CD4-positive, alpha-beta memory T cell (primary cell): ENCODE measurements at regions of chr22 and their contacts with region 1.

Region 1: DNA sequence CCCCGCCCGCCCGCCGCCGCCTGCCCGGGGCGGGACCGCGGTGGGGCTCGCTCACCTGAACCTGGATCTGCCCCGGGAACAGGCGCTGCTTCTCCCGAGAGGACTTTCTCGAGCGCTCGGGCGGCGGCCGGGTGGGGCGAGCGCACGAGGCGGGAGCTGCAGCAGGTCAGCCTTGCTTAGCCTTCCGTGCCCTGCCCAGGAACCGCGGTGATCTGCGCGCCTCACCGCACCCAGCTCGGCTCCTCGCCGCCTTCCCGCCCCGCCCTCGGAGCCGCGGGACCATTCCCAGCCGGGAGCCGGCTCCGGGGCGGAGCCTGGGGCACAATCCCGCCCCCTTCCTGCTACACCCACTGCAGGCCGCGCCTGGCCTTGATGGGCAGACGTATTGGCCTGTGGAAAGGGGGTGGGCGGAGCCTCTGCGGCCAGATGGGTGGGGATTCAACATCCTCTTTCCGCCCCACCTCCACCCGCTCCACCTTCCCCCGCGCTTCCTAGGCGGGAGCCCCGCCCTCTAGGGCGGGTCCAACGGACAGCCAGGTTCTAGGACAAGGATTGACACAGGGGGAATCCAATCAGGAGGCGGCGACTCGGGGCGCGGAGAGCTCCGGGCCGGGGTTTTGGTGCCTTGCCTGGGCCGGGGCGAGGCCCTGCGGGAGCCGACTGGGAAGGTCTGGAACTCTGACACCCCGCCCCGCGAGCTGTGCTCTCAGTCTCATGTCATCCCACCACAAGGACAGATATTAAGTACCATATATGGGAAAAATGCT is at the start of gene MYH9:
- DNase-seq: peak; percentile 99
- H3K4me3 ChIP-seq: peak within 1 kb of the TSS; percentile 88 to 92
- H3K4me3 Mint-ChIP-seq: peak within 1 kb of the TSS; percentile 88 to 98 (median 94)
- H3K27ac ChIP-seq: peak within 1 kb of the TSS; percentile 80
- H3K27ac Mint-ChIP-seq: peak within 1 kb of the TSS; percentile 84 to 99 (median 97)
- H3K4me1 ChIP-seq: peaks cover 28% of the 10 kb centered on the region
- H3K4me1 Mint-ChIP-seq: peaks cover 12 to 45% (median 26%) of the 10 kb centered on the region in 4 donors
- H3K27me3 ChIP-seq: no peaks in the 10 kb centered on the region
- H3K27me3 Mint-ChIP-seq: no peaks in the 10 kb centered on the region
- total RNA-seq, gene MYH9: 717 to 734 TPM

Region 2: DNA sequence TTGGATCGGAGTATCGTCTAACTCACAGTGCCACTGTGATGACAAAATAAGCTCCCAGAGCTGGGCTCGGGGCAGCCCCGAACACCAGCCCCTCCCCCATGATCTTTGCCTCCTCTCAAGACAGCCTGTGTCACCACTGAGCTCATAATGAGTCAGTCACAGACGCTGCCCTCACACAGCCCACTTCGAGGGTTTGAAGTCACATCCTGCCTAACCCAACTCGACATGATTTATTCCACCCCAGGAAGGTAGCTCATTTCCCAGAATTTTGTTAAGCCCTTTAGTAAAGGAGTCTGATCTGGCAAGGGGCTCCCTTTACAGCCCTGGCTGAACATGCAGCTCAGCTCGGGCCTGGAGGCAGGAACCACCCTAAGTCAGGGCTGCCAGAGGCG is 22.9 kb before region 1 on chr22:
- CTCF ChIA-PET with region 1: interaction called, 12 read pairs
- POLR2A ChIA-PET with region 1: interaction called, 2,535 read pairs
- intact Hi-C with region 1: loop called (anchors 2 kb)
- DNase-seq: peak; percentile 84 to 98 (median 88)
- H3K4me3 ChIP-seq: no peak overlapping the region
- H3K4me3 Mint-ChIP-seq: peak overlapping the region; percentile 69 to 92 (median 80)
- H3K27ac ChIP-seq: peak overlapping the region; percentile 91
- H3K27ac Mint-ChIP-seq: peak overlapping the region; percentile 92 to 100 (median 97)
- H3K4me1 ChIP-seq: peaks cover 100% of the 10 kb centered on the region
- H3K4me1 Mint-ChIP-seq: peaks cover 73 to 100% (median 88%) of the 10 kb centered on the region in 4 donors
- H3K27me3 ChIP-seq: no peaks in the 10 kb centered on the region
- H3K27me3 Mint-ChIP-seq: no peaks in the 10 kb centered on the region

Region 3: DNA sequence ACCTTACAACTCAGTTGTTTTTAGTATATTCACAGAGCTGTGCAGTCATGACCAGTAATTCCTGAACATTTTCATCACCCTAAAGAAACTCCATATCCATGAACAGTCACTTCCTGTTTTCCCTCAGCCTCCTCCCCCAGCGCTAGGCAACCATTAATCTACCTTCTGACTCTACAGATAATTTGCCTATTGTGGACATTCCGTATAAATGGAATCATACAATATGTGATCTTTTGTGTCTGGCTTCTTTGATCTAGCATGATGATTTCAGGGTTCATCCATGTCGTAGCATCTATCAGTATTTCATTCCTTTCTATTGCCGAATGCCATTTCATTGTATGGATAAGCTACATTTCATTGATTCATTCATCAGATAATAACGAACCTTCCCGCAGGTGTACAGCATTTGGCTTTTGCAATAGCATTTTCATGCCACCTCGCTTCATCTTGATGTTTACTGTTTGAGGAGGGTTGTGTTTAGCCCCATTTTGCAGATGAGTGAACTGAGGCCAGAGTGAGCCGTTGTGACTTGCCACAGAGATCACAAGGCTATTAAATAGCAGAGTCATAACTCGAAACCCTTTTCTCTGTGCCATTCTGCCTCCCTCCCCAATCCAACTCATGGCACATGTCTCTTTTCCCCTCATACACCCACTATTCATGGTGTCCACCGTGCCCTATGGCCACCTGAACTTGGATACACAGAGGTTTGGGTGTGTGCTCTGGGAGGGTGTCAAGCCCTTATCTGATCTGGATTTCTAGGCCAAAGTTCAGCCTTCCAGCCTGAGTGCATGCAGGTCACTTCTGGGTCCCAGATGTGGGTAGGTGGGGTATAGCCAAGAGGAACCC is 10.9 kb after region 1 on chr22:
- CTCF ChIA-PET with region 1: interaction called, 10 read pairs
- POLR2A ChIA-PET with region 1: interaction called, 33 read pairs
- intact Hi-C with region 1: loop called (anchors 2 kb)
- DNase-seq: no peak
- H3K4me3 ChIP-seq: no peak overlapping the region
- H3K4me3 Mint-ChIP-seq: peak overlapping the region in 1 of 8 donors; percentile 0
- H3K27ac ChIP-seq: no peak overlapping the region
- H3K27ac Mint-ChIP-seq: peak overlapping the region in 1 of 7 donors; percentile 34
- H3K4me1 ChIP-seq: peaks cover 19% of the 10 kb centered on the region
- H3K4me1 Mint-ChIP-seq: peaks cover 18 to 32% (median 20%) of the 10 kb centered on the region in 4 donors
- H3K27me3 ChIP-seq: no peaks in the 10 kb centered on the region
- H3K27me3 Mint-ChIP-seq: no peaks in the 10 kb centered on the region

Region 4: DNA sequence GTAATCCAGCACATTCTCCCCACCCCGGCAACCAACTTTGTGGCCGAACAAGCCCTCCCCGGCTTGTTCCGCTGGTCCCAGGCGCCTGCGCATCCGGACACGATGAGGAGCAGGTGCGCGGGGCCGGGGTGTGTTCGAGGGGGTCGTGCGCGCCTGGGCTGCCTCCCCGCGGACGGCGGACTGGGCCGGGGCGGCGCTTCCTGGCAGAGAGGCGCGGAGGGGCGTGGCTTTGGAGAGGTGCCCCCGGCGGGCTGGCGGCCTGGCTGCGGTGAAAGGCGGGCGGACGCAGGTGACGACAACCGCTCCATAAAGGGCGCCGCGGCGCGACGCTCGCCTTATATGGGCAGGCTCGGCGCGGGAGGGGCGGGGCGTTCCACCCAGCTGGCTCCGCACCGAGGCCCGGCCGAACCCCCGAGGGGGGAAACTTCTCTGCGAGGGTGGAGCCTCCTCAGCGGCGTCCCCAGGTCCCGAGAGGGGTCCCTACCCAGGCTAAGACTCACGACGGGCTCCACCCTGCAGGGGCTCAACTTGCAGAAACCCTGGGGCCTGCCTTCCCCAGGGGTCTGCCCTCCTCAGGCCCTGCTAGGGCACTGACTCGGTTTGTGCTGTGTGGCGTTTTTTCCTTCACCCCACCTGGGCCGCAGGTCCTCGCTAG is 67.1 kb after region 1 on chr22:
- CTCF ChIA-PET with region 1: interaction called, 4 read pairs
- POLR2A ChIA-PET with region 1: interaction called, 94 read pairs
- intact Hi-C with region 1: loop called (anchors 1 kb)
- DNase-seq: peak; percentile 93 to 95 (median 94)
- H3K4me3 ChIP-seq: peak overlapping the region; percentile 57 to 78
- H3K4me3 Mint-ChIP-seq: peak overlapping the region; percentile 53 to 85 (median 82)
- H3K27ac ChIP-seq: peak overlapping the region; percentile 88
- H3K27ac Mint-ChIP-seq: peak overlapping the region; percentile 92 to 98 (median 93)
- H3K4me1 ChIP-seq: peaks cover 55% of the 10 kb centered on the region
- H3K4me1 Mint-ChIP-seq: peaks cover 29 to 48% (median 44%) of the 10 kb centered on the region in 4 donors
- H3K27me3 ChIP-seq: no peaks in the 10 kb centered on the region
- H3K27me3 Mint-ChIP-seq: no peaks in the 10 kb centered on the region